Heart right ventricle (tissue), 16 donors: ENCODE measurements at regions of chr17 and their contacts with region 1.

Region 1: DNA sequence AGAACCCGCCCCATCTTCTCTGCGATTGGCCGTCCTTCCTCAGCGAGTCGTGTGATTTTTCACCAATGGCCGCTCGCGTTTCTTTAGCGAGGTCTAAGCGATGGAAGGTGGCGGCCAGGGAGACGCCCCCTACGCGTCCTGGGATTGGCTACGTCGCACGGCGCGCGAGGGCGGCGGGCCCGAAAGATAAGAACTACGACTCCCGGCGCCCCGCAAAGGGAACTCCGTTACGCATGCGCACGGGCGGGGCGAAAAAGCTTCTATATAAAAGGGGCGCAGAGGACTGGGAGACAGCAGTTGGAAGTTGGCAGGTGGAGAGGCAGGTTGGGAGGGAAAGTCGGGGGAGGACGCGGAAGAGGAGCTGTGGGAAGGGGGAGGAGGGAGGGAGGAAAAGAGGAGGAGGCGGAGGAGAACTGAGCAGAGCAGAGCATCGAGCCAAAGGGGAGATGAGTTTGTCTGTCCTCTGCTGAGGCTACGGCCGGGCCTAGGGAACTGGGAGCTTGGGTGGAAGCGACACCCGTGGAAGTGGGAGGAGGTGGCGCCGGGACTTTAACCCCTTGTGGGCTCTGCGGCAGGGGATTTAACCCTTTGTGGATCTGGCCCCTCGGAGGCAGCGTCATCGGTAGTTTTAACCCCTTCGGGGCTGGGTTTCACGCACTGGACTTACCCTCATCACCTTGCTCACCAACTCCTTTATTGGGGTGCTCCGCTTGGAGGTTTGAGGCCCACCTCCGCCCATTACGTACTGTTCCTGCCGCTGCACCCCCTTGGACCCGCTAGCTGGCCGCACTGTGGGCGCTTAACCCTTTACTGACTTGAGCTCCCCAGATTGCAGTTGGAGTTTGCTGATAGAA is at the start of gene HEXIM1:
- DNase-seq: peak; percentile 99
- ATAC-seq: peak; percentile 73 to 91 (median 84)
- H3K4me3 ChIP-seq: peak within 1 kb of the TSS; percentile 63 to 97 (median 76)
- H3K27ac ChIP-seq: peak within 1 kb of the TSS; percentile 92 to 99 (median 98)
- H3K4me1 ChIP-seq: peaks cover 11 to 62% (median 54%) of the 10 kb centered on the region in 9 donors
- H3K27me3 ChIP-seq: no peaks in the 10 kb centered on the region
- CTCF ChIP-seq: no peak
- total RNA-seq, gene HEXIM1: 17.0 to 37.4 (median 20.1) TPM

Region 2: DNA sequence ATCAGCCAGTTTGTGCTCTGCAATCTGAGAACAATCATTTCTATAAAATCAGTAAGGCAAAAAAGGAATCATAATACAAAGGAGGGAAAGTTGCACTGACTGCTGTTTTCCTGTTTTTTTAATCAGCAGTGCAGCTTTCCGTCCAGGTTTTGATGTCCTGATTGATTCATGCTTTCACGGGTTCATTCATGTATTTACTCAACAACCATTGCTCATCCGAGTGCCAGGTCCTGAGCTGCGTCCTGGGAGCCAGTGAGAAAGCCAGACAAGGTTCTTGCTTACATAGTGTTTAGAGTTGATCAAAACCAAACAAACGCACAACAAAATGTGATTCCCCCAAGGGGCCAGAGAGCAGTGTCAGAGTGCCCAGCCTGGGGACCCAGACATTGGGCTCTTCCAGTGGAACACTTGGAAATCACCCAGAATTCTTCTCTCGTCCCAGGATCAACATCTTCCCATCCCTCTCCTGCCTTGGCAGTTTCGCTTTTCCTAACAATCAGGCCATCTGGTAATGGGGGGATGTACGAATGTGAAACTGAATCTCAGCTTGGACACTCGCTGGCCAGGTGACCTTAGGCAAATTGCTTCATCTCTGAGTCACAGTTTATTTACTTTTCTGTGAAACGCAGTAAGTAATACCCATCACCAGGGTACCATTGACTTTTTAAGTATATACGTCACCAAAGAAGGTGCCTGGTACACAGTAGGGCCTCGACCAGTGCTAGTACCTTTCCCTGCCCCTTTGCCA is 167.0 kb before region 1 on chr17:
- intact Hi-C with region 1: no loop called
- DNase-seq: no peak
- ATAC-seq: no peak
- H3K4me3 ChIP-seq: no peak overlapping the region
- H3K27ac ChIP-seq: peak overlapping the region in 7 of 10 donors; percentile 33 to 89 (median 82)
- H3K4me1 ChIP-seq: peaks cover 6 to 63% (median 41%) of the 10 kb centered on the region in 9 donors
- H3K27me3 ChIP-seq: peaks cover 0 to 37% (median 14%) of the 10 kb centered on the region in 7 donors
- CTCF ChIP-seq: no peak

Region 3: DNA sequence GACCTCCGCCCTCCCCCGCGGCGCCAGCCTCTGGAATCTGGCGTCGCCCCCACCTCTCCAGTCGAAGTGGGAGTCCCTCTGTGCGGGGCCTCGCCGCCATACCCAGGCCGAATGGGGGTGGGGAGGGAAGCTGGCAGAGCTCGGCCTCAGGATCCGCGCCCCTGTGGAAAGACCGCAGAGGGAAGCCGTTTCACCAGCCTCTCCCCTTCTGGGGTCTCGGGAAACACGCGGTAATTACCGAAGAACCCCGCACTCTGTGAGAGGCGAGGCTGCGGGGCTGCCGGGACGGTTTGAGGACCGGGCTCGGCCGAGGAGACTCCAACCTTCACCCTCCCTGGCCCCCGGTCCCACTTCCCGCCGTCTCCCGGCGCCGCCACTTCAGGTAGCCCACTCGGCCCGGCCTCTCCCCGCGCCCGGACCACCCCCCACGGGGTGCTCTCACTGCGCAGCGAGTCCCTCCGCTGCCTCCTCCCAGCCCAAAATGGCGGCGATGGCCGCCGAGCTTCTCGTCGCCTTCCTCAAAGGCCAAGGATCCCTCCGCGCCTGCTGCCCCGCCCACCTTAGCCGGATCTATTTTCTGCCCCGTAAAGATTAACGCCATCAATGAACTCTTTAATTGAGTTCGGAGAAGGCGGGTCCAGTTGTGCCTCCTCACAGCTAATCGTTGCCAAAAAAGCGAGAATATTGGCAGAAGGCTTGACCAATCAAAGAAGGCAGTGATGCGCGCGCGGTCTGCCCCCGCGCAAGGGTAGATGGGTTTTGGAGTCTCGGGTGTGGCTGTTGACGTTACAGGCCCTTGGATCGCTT is 12.8 kb after region 1 on chr17:
- intact Hi-C with region 1: loop called in 4 of 10 experiments (anchors 1 kb)
- DNase-seq: peak; percentile 96 to 99
- ATAC-seq: peak; percentile 94 to 97 (median 97)
- H3K4me3 ChIP-seq: peak overlapping the region; percentile 79 to 98 (median 94)
- H3K27ac ChIP-seq: peak overlapping the region; percentile 99 to 100 (median 100)
- H3K4me1 ChIP-seq: peaks cover 10 to 55% (median 39%) of the 10 kb centered on the region in 9 donors
- H3K27me3 ChIP-seq: no peaks in the 10 kb centered on the region
- CTCF ChIP-seq: peak in 3 of 9 donors; percentile 2 to 58 (median 57)

Region 4: DNA sequence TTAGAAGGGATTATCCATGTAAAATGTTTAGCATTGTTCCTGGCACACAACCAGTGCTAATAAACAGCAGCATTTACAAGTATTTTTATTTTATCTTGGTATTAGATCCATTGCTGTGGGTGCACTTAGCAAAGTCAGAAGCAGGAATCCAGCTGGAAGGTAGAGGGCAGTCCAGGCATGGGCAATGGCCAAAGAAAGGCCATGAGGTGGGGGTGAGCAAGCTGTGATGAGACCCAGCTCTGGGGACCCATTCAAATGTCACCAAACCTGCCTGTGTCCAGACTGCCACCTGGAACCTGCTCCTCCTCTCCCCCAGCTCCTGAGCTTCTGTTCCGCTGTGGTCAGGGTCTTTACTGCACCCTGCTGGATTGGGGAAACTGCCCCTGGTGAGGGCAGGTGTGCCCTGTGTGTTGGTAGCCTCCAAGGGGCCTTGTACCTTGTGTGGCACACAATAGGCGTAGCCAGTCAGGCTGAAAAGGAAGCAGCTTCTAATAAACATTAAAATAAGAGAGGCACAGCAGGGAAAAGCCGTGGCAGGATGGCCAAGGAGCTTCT is 517.7 kb after region 1 on chr17:
- intact Hi-C with region 1: no loop called
- DNase-seq: no peak
- ATAC-seq: no peak
- H3K4me3 ChIP-seq: no peak overlapping the region
- H3K27ac ChIP-seq: no peak overlapping the region
- H3K4me1 ChIP-seq: no peaks in the 10 kb centered on the region
- H3K27me3 ChIP-seq: peaks cover 0 to 58% (median 14%) of the 10 kb centered on the region in 7 donors
- CTCF ChIP-seq: no peak